PC-9 (cell line): ENCODE measurements at regions of chr19 and their contacts with region 1.

Region 1: GRCh38 chr19:14366498-14366915 is 14.7 kb upstream of the ADGRE5 start:
- DNase-seq: peak; percentile 90 to 93
- H3K4me3 ChIP-seq: no peak overlapping the region
- H3K27ac ChIP-seq: no peak overlapping the region
- H3K4me1 ChIP-seq: peaks cover 8% of the 10 kb centered on the region; the same call in 1 of the 2 replicates
- H3K27me3 ChIP-seq: no peaks in the 10 kb centered on the region
- CTCF ChIP-seq: no peak

Region 2: GRCh38 chr19:14337510-14337909 is 29.0 kb before region 1 on chr19:
- CTCF ChIA-PET with region 1: interaction called, 13 read pairs
- POLR2A ChIA-PET with region 1: no interaction called
- intact Hi-C with region 1: no loop called
- DNase-seq: no peak
- H3K4me3 ChIP-seq: no peak overlapping the region
- H3K27ac ChIP-seq: no peak overlapping the region
- H3K4me1 ChIP-seq: peaks cover 11% of the 10 kb centered on the region
- H3K27me3 ChIP-seq: no peaks in the 10 kb centered on the region
- CTCF ChIP-seq: no peak

Region 3: DNA sequence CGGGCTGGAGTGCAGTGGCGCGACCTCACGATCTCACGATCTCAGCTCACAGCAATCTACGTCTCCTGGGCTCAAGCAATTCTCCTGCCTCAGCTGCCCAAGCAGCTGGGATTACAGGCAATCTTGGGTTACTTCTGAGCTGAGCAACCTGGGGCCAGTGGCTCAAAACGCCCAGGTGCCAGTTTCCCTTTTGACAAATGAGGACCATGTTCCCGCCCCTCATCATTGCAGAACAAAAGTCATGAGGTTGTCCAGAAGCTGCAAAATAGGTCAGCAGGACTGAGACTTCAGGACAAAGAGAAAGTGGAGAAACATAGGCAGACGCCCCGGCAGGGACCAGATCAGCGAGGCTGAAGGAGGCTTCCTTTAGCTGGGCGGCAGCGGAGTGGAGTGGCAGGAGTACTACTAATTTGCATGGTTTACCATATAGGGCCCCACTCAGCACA is 11.4 kb after region 1 on chr19:
- CTCF ChIA-PET with region 1: no interaction called
- POLR2A ChIA-PET with region 1: interaction called, 33 read pairs
- intact Hi-C with region 1: no loop called
- DNase-seq: peak in 1 of 2 experiments; percentile 37
- H3K4me3 ChIP-seq: no peak overlapping the region; the same call in 1 of the 2 replicates
- H3K27ac ChIP-seq: no peak overlapping the region
- H3K4me1 ChIP-seq: peaks cover 18% of the 10 kb centered on the region
- H3K27me3 ChIP-seq: no peaks in the 10 kb centered on the region
- CTCF ChIP-seq: no peak

Region 4: GRCh38 chr19:14383661-14384555 is 17.4 kb after region 1 on chr19:
- CTCF ChIA-PET with region 1: no interaction called
- POLR2A ChIA-PET with region 1: interaction called, 33 read pairs
- intact Hi-C with region 1: no loop called
- DNase-seq: peak in 1 of 2 experiments; percentile 14
- H3K4me3 ChIP-seq: peak overlapping the region; percentile 10; the same call in 1 of the 2 replicates
- H3K27ac ChIP-seq: peak overlapping the region; percentile 30
- H3K4me1 ChIP-seq: peaks cover 36% of the 10 kb centered on the region
- H3K27me3 ChIP-seq: no peaks in the 10 kb centered on the region
- CTCF ChIP-seq: no peak

Region 5: DNA sequence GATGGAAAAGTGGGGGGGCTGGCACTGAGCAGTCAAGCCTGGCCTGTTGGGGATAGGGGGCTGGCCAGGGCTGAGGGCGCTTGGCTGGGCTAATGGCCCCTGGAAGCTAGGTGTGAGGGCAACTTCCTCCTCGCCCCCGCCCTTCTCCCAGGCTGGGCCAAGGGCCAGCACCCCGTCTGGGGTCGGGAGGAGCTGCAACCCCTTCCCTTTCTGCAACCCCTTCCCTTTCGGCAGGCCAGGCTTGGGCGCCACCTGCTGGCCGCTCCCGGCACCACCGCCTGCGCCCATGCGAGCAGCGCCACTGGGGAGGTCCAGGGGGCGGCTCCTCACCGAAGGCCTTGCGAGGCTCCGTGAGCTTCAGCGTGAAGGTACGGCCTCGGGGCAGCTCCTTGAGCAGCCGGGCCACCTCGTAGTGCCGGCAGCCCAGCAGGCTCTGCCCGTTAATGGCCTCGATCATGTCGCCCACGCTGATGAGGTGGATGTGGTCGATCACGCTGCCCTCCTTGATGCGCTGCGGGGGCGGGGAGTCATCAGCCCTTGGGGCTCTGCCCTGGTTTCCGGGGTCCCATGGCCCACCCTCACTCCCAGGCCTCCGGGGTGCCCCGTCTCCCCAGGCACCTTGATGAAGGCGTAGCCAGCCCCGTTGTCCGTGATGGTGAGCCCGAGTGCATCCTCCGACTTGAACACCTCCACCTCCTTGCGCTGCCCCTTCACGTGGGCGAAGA is 113.6 kb after region 1 on chr19:
- CTCF ChIA-PET with region 1: no interaction called
- POLR2A ChIA-PET with region 1: no interaction called
- intact Hi-C with region 1: no loop called
- DNase-seq: peak in 1 of 2 experiments; percentile 47
- H3K4me3 ChIP-seq: no peak overlapping the region
- H3K27ac ChIP-seq: no peak overlapping the region
- H3K4me1 ChIP-seq: peaks cover 30% of the 10 kb centered on the region
- H3K27me3 ChIP-seq: no peaks in the 10 kb centered on the region
- CTCF ChIP-seq: peak; percentile 94